Activated CD8-positive, alpha-beta T cell treated with anti-CD3 and anti-CD28 coated beads for 36 hours (primary cell): ENCODE measurements at regions of chr14 and their contacts with region 1.

Region 1: GRCh38 chr14:52961060-52961639 is 10.3 kb upstream of the FERMT2 start:
- DNase-seq: peak; percentile 64
- ATAC-seq: peak; percentile 83
- H3K4me3 Mint-ChIP-seq: no peak overlapping the region
- H3K27ac Mint-ChIP-seq: no peak overlapping the region
- H3K4me1 Mint-ChIP-seq: peaks cover 3% of the 10 kb centered on the region
- H3K27me3 Mint-ChIP-seq: no peaks in the 10 kb centered on the region
- CTCF ChIP-seq: peak; percentile 60

Region 2: DNA sequence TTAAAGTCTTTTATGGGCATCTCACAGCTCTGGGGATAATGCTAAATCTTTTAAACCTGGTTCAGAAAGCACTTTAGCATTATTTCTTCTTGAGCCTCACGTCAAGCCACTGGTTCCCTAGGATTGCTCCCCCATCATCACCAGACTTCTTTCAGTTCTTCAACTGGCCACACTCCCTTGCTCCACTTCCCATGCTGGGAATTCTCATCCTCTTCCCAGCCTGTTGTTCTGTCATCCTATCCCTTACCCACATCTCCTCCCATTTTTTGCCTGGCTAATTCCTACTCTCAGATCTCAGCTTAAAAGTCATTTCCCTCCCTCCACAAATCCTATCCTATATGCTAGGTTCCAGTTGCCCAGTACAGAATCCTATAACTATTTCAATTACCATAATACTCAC is 24.7 kb before region 1 on chr14:
- CTCF ChIA-PET with region 1: no interaction called
- POLR2A ChIA-PET with region 1: no interaction called
- intact Hi-C with region 1: no loop called
- DNase-seq: no peak
- ATAC-seq: no peak
- H3K4me3 Mint-ChIP-seq: no peak overlapping the region
- H3K27ac Mint-ChIP-seq: no peak overlapping the region
- H3K4me1 Mint-ChIP-seq: no peaks in the 10 kb centered on the region
- H3K27me3 Mint-ChIP-seq: peaks cover 5% of the 10 kb centered on the region
- CTCF ChIP-seq: no peak

Region 3: GRCh38 chr14:52950898-52951689 is 10.1 kb before region 1 on chr14 and contains the start of gene FERMT2:
- CTCF ChIA-PET with region 1: interaction called, 12 read pairs
- POLR2A ChIA-PET with region 1: interaction called, 3 read pairs
- intact Hi-C with region 1: no loop called
- DNase-seq: peak; percentile 10
- ATAC-seq: peak; percentile 40
- H3K4me3 Mint-ChIP-seq: peak within 1 kb of the TSS; percentile 81
- H3K27ac Mint-ChIP-seq: no peak within 1 kb of the TSS
- H3K4me1 Mint-ChIP-seq: peaks cover 28% of the 10 kb centered on the region
- H3K27me3 Mint-ChIP-seq: peaks cover 45% of the 10 kb centered on the region
- CTCF ChIP-seq: no peak
- total RNA-seq, gene FERMT2: 0.77 to 1.0 TPM

Region 4: DNA sequence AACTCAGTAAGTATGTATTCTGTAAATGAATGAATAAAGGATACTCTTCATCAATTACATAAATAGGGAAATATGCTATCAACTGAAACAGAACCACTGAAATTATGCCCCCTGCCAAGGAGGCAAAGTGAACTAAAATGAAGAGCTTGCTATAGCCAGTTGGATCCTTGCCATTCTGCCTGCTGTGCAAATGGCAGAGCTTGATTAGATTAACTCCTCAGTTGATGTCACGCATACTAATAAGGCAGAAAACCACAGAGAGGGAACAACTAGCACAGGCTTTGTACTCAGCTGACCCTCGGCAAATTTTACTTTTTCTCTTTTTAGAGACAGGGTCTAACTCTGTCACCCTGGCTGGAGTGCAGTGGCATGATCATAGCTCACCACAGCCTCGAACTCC is 26.4 kb after region 1 on chr14:
- CTCF ChIA-PET with region 1: no interaction called
- POLR2A ChIA-PET with region 1: no interaction called
- intact Hi-C with region 1: no loop called
- DNase-seq: no peak
- ATAC-seq: no peak
- H3K4me3 Mint-ChIP-seq: no peak overlapping the region
- H3K27ac Mint-ChIP-seq: no peak overlapping the region
- H3K4me1 Mint-ChIP-seq: no peaks in the 10 kb centered on the region
- H3K27me3 Mint-ChIP-seq: no peaks in the 10 kb centered on the region
- CTCF ChIP-seq: no peak

Region 5: DNA sequence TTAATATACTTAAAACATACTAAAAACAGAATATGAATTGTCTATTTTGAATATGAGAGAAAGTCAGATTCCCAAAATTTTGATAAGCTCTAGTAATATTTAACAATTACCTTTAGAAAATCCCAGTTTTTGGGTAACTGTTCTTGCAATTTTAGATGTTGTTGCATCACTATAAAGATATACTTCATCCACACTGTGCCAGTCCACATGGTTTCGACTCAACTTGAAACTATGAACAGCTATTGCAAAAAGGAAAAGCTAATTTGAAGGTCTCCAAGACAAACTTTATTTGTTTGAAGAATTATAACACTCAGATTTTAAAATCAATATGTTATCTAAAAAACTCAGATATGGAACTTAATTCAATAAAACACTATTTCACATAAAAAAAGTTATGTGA is 132.1 kb after region 1 on chr14:
- CTCF ChIA-PET with region 1: no interaction called
- POLR2A ChIA-PET with region 1: no interaction called
- intact Hi-C with region 1: no loop called
- DNase-seq: peak; percentile 32
- ATAC-seq: peak; percentile 37
- H3K4me3 Mint-ChIP-seq: no peak overlapping the region
- H3K27ac Mint-ChIP-seq: peak overlapping the region; percentile 78
- H3K4me1 Mint-ChIP-seq: peaks cover 11% of the 10 kb centered on the region
- H3K27me3 Mint-ChIP-seq: no peaks in the 10 kb centered on the region
- CTCF ChIP-seq: no peak